Heart right ventricle (tissue), 16 donors: ENCODE measurements at regions of chr12 and their contacts with region 1.

Region 1: DNA sequence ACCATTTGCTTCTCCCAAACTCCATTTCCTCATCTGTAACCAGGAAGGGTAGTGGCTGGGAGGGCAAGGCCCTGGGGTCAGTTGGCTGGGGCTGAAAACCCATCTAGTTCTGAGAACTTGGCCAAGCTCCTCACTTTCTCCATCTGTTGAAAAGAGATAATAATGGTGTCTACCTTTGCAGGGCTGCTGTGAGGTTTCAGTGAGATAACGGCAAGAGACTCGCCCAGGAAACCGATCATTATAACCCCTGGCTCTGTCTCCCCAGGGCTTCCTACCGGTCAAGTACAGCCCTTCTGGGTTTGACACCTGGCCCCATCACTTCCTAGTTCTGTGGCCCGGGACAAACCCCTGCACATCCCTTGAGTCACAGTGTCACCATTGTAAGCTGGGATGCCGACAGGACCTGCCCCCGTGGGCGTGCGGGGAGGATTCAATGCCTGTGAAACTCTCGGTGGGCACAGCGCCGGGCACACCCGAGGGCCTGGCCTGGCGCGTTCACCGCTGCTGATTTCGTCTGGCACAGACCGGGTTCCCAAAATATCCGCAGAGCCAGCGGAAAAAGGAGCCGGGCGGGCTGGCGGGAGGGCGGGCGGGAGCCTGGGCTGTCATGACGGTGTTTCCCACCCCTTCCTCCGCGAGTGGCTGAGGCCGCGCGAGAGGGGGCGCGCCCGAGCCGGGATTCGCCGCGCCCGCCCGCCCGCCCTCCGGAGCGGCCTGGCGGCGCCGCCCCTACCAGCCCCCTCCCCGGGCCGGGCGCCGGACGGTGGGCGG is 4.4 kb downstream of the KMT5A start:
- DNase-seq: peak; percentile 83 to 87
- ATAC-seq: peak; percentile 43 to 78 (median 65)
- H3K4me3 ChIP-seq: peak overlapping the region; percentile 29 to 75 (median 60)
- H3K27ac ChIP-seq: peak overlapping the region; percentile 55 to 99 (median 94)
- H3K4me1 ChIP-seq: peaks cover 8 to 64% (median 50%) of the 10 kb centered on the region in 9 donors
- H3K27me3 ChIP-seq: no peaks in the 10 kb centered on the region
- CTCF ChIP-seq: peak in 6 of 9 donors; percentile 15 to 50 (median 30)

Region 2: DNA sequence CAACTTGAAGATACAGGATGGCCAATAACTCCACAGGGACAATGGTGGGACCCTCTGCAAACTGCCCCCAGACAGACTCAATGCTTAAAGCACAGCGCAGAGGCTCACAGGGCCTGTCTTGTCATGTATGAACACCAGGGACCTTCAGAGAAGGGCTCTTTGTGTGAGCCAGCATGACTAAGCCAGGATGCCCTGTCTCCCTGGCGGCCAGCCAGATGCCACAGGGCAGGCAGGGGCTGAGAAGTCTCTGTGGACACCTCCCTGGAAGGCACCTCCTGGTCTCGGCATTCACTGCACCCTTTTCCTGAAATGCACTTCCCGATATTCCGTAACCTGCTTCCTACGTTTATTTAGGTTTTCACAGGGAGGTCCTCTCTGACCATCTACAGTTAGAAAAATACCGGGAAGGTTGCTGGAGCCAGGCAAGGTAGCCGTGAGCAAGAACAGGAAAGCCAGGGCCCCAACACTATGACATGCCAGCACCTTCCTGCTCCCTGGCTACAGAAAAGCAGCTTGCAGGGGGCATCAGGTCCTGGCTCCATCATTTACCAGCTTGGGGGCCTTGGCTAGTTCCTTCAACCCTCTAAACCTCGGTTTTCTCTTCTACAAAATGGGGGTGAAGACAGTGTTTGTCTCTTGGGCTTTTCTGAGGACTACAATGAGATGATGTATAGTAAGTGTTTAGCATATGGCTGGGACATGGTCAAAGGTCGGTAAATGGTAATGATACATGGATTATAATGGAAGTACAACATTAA is 302.5 kb before region 1 on chr12:
- intact Hi-C with region 1: no loop called
- DNase-seq: peak in 1 of 2 donors; percentile 69
- ATAC-seq: peak; percentile 45 to 80 (median 64)
- H3K4me3 ChIP-seq: no peak overlapping the region
- H3K27ac ChIP-seq: peak overlapping the region in 9 of 10 donors; percentile 28 to 91 (median 78)
- H3K4me1 ChIP-seq: peaks cover 8 to 93% (median 71%) of the 10 kb centered on the region in 9 donors
- H3K27me3 ChIP-seq: no peaks in the 10 kb centered on the region
- CTCF ChIP-seq: peak in 1 of 9 donors; percentile 16

Region 3: DNA sequence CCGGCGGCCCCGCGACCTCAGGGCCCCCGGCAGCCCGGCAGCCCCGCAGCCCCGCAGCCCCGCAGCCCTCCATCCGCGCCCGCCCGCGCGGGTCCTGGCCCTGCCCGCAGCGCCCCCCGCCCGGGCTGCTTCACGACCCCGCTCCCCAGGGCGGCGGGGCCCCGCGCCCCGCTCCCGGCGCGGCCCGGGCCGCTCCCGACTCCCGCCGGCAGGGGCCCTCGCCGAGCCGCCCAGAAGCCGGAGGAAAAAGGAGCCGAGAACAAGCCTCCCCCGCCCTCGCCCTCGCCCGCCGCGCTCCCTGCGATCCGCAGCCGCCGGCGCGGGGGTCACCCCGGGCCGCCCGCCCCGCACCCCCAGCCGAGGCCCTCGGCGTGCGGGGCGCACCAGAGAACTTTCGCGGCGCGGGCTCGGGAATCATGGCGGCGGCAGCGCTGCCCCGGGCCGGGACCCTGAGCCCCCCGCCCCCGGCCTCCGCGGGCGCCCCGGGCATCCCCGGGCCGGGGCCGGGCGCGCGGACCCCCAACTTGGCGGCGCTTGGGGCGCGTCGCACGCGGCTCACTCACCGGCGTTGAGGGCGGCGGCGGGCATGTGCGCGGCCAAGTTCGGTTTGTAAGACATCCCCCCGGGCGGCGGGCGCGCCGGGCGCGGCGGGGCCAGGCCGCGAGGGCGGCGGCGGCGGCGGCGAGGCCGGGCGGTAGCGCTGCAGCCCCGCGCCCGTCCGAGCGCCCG is 117.2 kb before region 1 on chr12:
- intact Hi-C with region 1: no loop called
- DNase-seq: peak; percentile 78 to 79
- ATAC-seq: peak; percentile 25 to 70 (median 52)
- H3K4me3 ChIP-seq: peak overlapping the region; percentile 63 to 95 (median 75)
- H3K27ac ChIP-seq: peak overlapping the region; percentile 54 to 90 (median 84)
- H3K4me1 ChIP-seq: peaks cover 3 to 43% (median 36%) of the 10 kb centered on the region in 9 donors
- H3K27me3 ChIP-seq: no peaks in the 10 kb centered on the region
- CTCF ChIP-seq: peak; percentile 18 to 76 (median 56)

Region 4: GRCh38 chr12:123319826-123320225 is 68.5 kb before region 1 on chr12:
- intact Hi-C with region 1: no loop called
- DNase-seq: no peak
- ATAC-seq: no peak
- H3K4me3 ChIP-seq: no peak overlapping the region
- H3K27ac ChIP-seq: no peak overlapping the region
- H3K4me1 ChIP-seq: no peaks in the 10 kb centered on the region
- H3K27me3 ChIP-seq: no peaks in the 10 kb centered on the region
- CTCF ChIP-seq: no peak

Region 5: GRCh38 chr12:123365025-123365917 is 23.1 kb before region 1 on chr12:
- intact Hi-C with region 1: loop called in 4 of 10 experiments (anchors 1 to 2 kb)
- DNase-seq: peak; percentile 98
- ATAC-seq: peak; percentile 92 to 97 (median 96)
- H3K4me3 ChIP-seq: peak overlapping the region; percentile 85 to 98 (median 92)
- H3K27ac ChIP-seq: peak overlapping the region; percentile 86 to 99 (median 94)
- H3K4me1 ChIP-seq: peaks cover 3 to 37% (median 33%) of the 10 kb centered on the region in 9 donors
- H3K27me3 ChIP-seq: no peaks in the 10 kb centered on the region
- CTCF ChIP-seq: peak; percentile 54 to 92 (median 70)

Region 6: GRCh38 chr12:123433615-123434014 is 45.3 kb after region 1 on chr12:
- intact Hi-C with region 1: loop called in 2 of 10 experiments (anchors 5 kb)
- DNase-seq: no peak
- ATAC-seq: no peak
- H3K4me3 ChIP-seq: peak overlapping the region in 6 of 10 donors; percentile 4 to 89 (median 48)
- H3K27ac ChIP-seq: peak overlapping the region in 3 of 10 donors; percentile 50 to 98 (median 54)
- H3K4me1 ChIP-seq: peaks cover 0 to 56% (median 37%) of the 10 kb centered on the region in 9 donors
- H3K27me3 ChIP-seq: no peaks in the 10 kb centered on the region
- CTCF ChIP-seq: no peak

Region 7: GRCh38 chr12:123468562-123469185 is 80.3 kb after region 1 on chr12:
- intact Hi-C with region 1: loop called in 2 of 10 experiments (anchors 5 to 10 kb)
- DNase-seq: no peak
- ATAC-seq: no peak
- H3K4me3 ChIP-seq: no peak overlapping the region
- H3K27ac ChIP-seq: no peak overlapping the region
- H3K4me1 ChIP-seq: peaks cover 0 to 60% (median 32%) of the 10 kb centered on the region in 9 donors
- H3K27me3 ChIP-seq: no peaks in the 10 kb centered on the region
- CTCF ChIP-seq: peak in 4 of 9 donors; percentile 16 to 28 (median 24)

Region 8: GRCh38 chr12:123519141-123520001 is 131.0 kb after region 1 on chr12:
- intact Hi-C with region 1: loop called in 1 of 10 experiments (anchors 10 kb)
- DNase-seq: peak; percentile 60 to 69
- ATAC-seq: peak; percentile 71 to 93 (median 77)
- H3K4me3 ChIP-seq: no peak overlapping the region
- H3K27ac ChIP-seq: peak overlapping the region; percentile 69 to 91 (median 82)
- H3K4me1 ChIP-seq: peaks cover 4 to 56% (median 23%) of the 10 kb centered on the region in 9 donors
- H3K27me3 ChIP-seq: no peaks in the 10 kb centered on the region
- CTCF ChIP-seq: no peak

Region 9: GRCh38 chr12:123533672-123534643 is 145.6 kb after region 1 on chr12 and contains the start of gene RILPL1:
- intact Hi-C with region 1: loop called in 3 of 10 experiments (anchors 5 to 10 kb)
- DNase-seq: peak; percentile 40 to 62
- ATAC-seq: peak; percentile 46 to 88 (median 66)
- H3K4me3 ChIP-seq: peak within 1 kb of the TSS; percentile 56 to 96 (median 78)
- H3K27ac ChIP-seq: peak within 1 kb of the TSS; percentile 85 to 97 (median 93)
- H3K4me1 ChIP-seq: peaks cover 15 to 49% (median 32%) of the 10 kb centered on the region in 9 donors
- H3K27me3 ChIP-seq: peaks cover 0 to 22% (median 0%) of the 10 kb centered on the region in 7 donors
- CTCF ChIP-seq: peak in 7 of 9 donors; percentile 15 to 57 (median 48)
- total RNA-seq, gene RILPL1: 71.4 to 132 (median 86.6) TPM

Region 10: GRCh38 chr12:123580772-123581171 is 192.4 kb after region 1 on chr12:
- intact Hi-C with region 1: loop called in 2 of 10 experiments (anchors 5 kb)
- DNase-seq: no peak
- ATAC-seq: no peak
- H3K4me3 ChIP-seq: no peak overlapping the region
- H3K27ac ChIP-seq: peak overlapping the region in 3 of 10 donors; percentile 27 to 46 (median 44)
- H3K4me1 ChIP-seq: peaks cover 6 to 38% (median 32%) of the 10 kb centered on the region in 9 donors
- H3K27me3 ChIP-seq: no peaks in the 10 kb centered on the region
- CTCF ChIP-seq: no peak

Region 11: DNA sequence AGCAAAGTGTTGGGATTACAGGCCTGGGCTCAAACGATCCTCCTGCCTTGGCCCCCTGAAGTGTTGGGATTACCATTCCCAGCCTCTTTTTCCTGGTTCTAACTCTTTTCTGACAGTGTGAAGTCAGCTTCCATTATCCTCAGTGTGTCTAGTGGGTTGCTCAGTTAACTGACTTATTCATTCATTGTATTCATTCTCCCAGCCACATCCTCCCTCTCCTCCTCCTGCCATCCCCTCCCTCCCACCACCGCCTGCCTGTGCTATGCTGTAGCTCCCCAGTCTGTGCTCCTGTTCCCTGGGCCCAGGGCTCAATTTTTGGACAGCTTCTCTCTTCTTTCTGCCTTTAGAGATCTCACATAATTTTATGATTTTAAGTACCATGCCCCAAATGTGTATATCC is 343.2 kb after region 1 on chr12:
- intact Hi-C with region 1: no loop called
- DNase-seq: no peak
- ATAC-seq: no peak
- H3K4me3 ChIP-seq: no peak overlapping the region
- H3K27ac ChIP-seq: no peak overlapping the region
- H3K4me1 ChIP-seq: peaks cover 0 to 6% (median 0%) of the 10 kb centered on the region in 9 donors
- H3K27me3 ChIP-seq: no peaks in the 10 kb centered on the region
- CTCF ChIP-seq: no peak